Heart right ventricle (tissue), 16 donors: ENCODE measurements at regions of chr13 and their contacts with region 1.

Region 1: DNA sequence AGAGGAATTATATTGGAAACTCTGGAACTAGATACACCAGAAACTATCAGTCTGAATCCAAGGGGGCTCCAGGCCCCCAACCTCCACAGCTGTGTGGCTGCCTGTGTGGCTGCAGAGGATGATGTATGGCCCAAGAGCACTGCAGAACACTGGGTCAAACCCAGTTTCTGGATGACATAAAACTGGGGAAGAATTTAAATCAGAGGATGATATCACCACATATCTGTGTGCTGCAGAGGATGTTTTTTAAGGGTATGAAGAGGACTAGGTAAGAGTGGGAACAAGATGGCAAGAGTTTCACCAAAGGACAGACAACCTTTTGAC is 226.4 kb downstream of the SUCLA2 start:
- DNase-seq: no peak
- ATAC-seq: no peak
- H3K4me3 ChIP-seq: no peak overlapping the region
- H3K27ac ChIP-seq: no peak overlapping the region
- H3K4me1 ChIP-seq: peaks cover 0 to 7% (median 0%) of the 10 kb centered on the region in 9 donors
- H3K27me3 ChIP-seq: no peaks in the 10 kb centered on the region
- CTCF ChIP-seq: no peak

Region 2: GRCh38 chr13:46822551-46822950 is 952.1 kb before region 1 on chr13:
- intact Hi-C with region 1: loop called in 1 of 10 experiments (anchors 10 kb)
- DNase-seq: no peak
- ATAC-seq: no peak
- H3K4me3 ChIP-seq: no peak overlapping the region
- H3K27ac ChIP-seq: no peak overlapping the region
- H3K4me1 ChIP-seq: peaks cover 0 to 2% (median 0%) of the 10 kb centered on the region in 9 donors
- H3K27me3 ChIP-seq: no peaks in the 10 kb centered on the region
- CTCF ChIP-seq: no peak

Region 3: DNA sequence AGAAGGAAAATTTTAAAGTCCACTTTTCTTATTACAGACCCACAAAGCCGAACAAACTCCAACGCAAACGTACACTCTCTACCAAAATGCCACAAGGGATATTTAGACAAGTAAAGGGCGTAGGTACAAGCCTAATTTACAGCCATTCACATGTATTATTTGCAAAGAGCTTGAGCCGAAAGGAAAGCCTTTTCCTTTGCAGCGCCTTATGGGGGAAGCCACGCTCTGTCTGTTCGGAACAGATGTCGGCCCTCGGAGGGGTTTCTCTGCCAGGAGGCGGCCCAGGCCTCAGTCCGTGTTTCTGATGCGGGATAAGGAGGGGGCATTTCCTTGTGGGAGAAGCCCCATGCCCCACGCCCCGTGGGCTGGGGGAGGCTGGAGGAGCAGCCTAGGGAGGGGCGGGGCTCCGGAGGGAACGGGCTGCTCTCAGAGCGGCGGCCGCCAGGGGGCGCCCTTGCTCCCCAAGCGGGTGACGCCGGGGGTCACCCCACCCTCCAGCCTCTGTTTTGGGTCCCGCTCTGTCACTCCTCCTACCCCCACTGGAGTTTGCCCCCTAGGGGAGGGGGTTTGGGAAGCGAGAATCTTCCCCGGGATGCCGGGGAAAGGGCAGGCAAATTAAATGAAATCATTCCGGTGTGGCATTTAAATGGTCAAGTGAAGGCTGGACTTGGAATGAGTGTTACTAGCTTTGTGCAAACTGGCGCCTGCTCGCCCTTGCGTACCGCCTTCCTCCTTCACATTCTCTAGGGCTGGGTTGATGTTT is 880.7 kb before region 1 on chr13:
- intact Hi-C with region 1: loop called in 2 of 10 experiments (anchors 10 kb)
- DNase-seq: peak; percentile 44 to 73
- ATAC-seq: peak; percentile 90 to 95 (median 94)
- H3K4me3 ChIP-seq: peak overlapping the region; percentile 38 to 69 (median 59)
- H3K27ac ChIP-seq: peak overlapping the region in 4 of 10 donors; percentile 13 to 40 (median 17)
- H3K4me1 ChIP-seq: peaks cover 0 to 25% (median 12%) of the 10 kb centered on the region in 9 donors
- H3K27me3 ChIP-seq: peaks cover 0 to 56% (median 22%) of the 10 kb centered on the region in 7 donors
- CTCF ChIP-seq: peak; percentile 79 to 97 (median 96)

Region 4: GRCh38 chr13:46975173-46975572 is 799.5 kb before region 1 on chr13:
- intact Hi-C with region 1: loop called in 5 of 10 experiments (anchors 5 to 10 kb)
- DNase-seq: no peak
- ATAC-seq: no peak
- H3K4me3 ChIP-seq: no peak overlapping the region
- H3K27ac ChIP-seq: no peak overlapping the region
- H3K4me1 ChIP-seq: no peaks in the 10 kb centered on the region
- H3K27me3 ChIP-seq: no peaks in the 10 kb centered on the region
- CTCF ChIP-seq: no peak

Region 5: DNA sequence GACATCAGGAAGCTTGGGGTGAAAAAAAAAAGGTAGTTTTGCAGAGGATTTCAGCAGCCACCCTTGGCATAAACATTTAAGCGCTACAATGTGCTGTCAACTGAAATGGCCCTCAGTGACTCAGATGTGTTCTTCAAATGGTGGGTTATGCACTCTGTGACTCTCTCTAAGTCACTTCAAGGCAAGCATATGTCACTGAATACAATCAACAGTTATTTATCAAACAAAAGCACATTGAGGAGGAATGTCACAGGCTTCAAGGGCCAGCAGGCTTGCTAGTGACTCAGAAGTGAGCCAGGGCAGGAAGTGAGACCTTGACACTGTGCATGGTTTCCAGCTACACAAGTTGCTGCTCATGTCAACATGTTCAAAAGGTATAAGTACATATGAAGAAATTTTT is 354.1 kb before region 1 on chr13:
- intact Hi-C with region 1: loop called in 9 of 10 experiments (anchors 5 to 10 kb)
- DNase-seq: no peak
- ATAC-seq: peak in 3 of 8 donors; percentile 21 to 72 (median 42)
- H3K4me3 ChIP-seq: no peak overlapping the region
- H3K27ac ChIP-seq: no peak overlapping the region
- H3K4me1 ChIP-seq: no peaks in the 10 kb centered on the region
- H3K27me3 ChIP-seq: no peaks in the 10 kb centered on the region
- CTCF ChIP-seq: no peak